ENCODE measurements at regions of chr3 and their contacts with region 1.

Region 1: DNA sequence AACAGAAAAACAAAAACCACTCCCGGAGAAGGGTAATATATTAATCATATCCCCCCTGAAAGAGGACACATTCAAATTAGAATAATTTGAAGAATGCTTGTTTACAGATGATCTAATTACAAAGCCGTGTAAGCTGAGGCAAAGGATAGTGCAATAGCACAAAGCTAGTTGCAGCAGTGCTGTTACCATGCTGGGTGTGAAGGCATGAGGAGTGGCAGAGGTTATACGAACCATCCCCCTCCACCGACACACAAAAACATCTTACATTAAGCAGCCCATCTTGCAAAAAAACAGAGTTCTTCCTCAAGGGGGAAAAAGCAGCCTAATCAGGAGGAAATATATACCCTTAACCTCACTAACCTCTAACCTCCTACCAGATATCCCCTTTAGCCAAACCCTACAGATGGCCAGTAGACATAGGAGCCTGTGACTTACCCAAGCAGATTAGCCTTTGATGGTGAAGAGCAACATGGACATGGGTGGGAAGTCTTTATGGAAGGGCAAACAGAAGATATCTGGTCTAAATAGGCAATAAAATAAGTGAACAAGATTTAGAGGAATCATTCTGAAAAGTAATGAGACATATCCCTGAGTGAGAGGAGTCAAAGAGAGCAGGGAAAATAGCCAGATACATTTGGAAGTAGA is 119.5 kb upstream of the ARPP21 start:
- DNase-seq: no peak
- ATAC-seq: no peak
- H3K4me3 ChIP-seq: no peak overlapping the region
- H3K4me3 Mint-ChIP-seq: no peak overlapping the region
- H3K27ac ChIP-seq: no peak overlapping the region
- H3K27ac Mint-ChIP-seq: no peak overlapping the region
- H3K4me1 ChIP-seq: no peaks in the 10 kb centered on the region
- H3K4me1 Mint-ChIP-seq: no peaks in the 10 kb centered on the region
- H3K27me3 ChIP-seq: no peaks in the 10 kb centered on the region
- H3K27me3 Mint-ChIP-seq: no peaks in the 10 kb centered on the region
- CTCF ChIP-seq: no peak

Region 2: DNA sequence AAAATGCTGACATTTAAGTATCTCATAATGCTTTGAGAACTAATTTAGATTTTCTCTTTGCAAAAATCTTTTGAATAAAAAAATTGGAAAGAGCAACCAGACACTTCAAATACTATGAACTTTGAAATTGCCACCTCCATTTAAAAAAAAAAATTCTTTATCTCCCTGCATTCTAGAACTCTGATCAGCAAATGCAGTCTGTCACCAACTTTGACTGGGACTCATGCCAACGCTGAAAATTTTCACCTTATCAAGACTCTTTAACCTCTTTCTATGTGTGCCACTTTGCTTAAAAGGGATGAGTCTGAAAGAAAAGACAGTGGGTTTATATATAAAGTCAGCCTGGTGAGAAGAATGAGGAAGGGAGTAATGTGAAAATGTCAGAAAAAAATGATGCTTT is 71.7 kb before region 1 on chr3:
- CTCF ChIA-PET with region 1: no interaction called
- POLR2A ChIA-PET with region 1: no interaction called
- intact Hi-C with region 1: loop called in 1 of 2 experiments (anchors 10 kb)
- DNase-seq: no peak
- ATAC-seq: no peak
- H3K4me3 ChIP-seq: no peak overlapping the region
- H3K4me3 Mint-ChIP-seq: no peak overlapping the region
- H3K27ac ChIP-seq: no peak overlapping the region
- H3K27ac Mint-ChIP-seq: no peak overlapping the region
- H3K4me1 ChIP-seq: no peaks in the 10 kb centered on the region
- H3K4me1 Mint-ChIP-seq: no peaks in the 10 kb centered on the region
- H3K27me3 ChIP-seq: no peaks in the 10 kb centered on the region
- H3K27me3 Mint-ChIP-seq: no peaks in the 10 kb centered on the region
- CTCF ChIP-seq: no peak